ENCODE measurements at regions of chr3 and their contacts with region 1.

Region 1: GRCh38 chr3:184423561-184423960 is 43.7 kb downstream of the CHRD start:
- DNase-seq: no peak

Region 2: GRCh38 chr3:184525337-184526087 is 102.0 kb after region 1 on chr3:
- in situ Hi-C with region 1: loop called (anchors 5 kb)
- DNase-seq: peak; percentile 80